B cell (primary cell): ENCODE measurements at regions of chr2 and their contacts with region 1.

Region 1: DNA sequence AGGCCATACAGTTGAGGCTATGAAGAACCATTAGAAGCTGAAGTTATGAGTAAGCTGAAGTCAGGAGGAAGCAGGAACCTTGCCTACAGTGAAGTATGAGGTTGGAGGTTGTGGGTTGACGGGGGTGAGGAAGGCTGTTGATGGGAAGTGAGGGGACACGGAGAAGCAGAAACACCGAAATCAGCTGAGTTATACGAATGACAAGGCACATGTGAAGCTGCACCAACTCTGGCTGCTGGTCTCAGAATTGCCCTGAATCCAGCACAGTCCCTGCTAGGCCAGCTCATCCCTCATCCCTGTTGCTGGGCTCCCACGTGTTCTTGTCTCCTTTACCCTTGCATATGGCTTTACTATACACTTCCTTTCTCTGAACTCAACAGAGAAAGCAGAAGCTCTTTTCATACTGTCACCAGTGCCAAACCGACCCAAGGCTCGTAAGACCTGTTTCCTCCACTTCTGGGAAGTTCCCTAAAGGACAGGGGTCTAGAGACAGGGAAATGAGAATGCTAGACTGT is 9.2 kb upstream of the TMEM247 start:
- DNase-seq: peak; percentile 28
- ATAC-seq: no peak
- H3K4me3 ChIP-seq: no peak overlapping the region
- H3K4me3 Mint-ChIP-seq: no peak overlapping the region
- H3K27ac ChIP-seq: no peak overlapping the region
- H3K27ac Mint-ChIP-seq: no peak overlapping the region
- H3K4me1 ChIP-seq: peaks cover 4 to 7% of the 10 kb centered on the region in 2 donors
- H3K4me1 Mint-ChIP-seq: peaks cover 9% of the 10 kb centered on the region
- H3K27me3 ChIP-seq: no peaks in the 10 kb centered on the region
- H3K27me3 Mint-ChIP-seq: no peaks in the 10 kb centered on the region
- CTCF ChIP-seq: no peak

Region 2: GRCh38 chr2:46650556-46651001 is 180.4 kb after region 1 on chr2:
- CTCF ChIA-PET with region 1: interaction called, 13 read pairs
- POLR2A ChIA-PET with region 1: no interaction called
- intact Hi-C with region 1: no loop called
- DNase-seq: peak; percentile 83
- ATAC-seq: peak; percentile 70
- H3K4me3 ChIP-seq: no peak overlapping the region
- H3K4me3 Mint-ChIP-seq: no peak overlapping the region
- H3K27ac ChIP-seq: no peak overlapping the region
- H3K27ac Mint-ChIP-seq: no peak overlapping the region
- H3K4me1 ChIP-seq: no peaks in the 10 kb centered on the region
- H3K4me1 Mint-ChIP-seq: no peaks in the 10 kb centered on the region
- H3K27me3 ChIP-seq: no peaks in the 10 kb centered on the region
- H3K27me3 Mint-ChIP-seq: peaks cover 6% of the 10 kb centered on the region
- CTCF ChIP-seq: peak; percentile 97